ENCODE measurements at regions of chr5 and their contacts with region 1.

Region 1: GRCh38 chr5:35926389-35927051 is 11.9 kb downstream of the CAPSL start:
- H3K4me3 ChIP-seq: no peak overlapping the region
- H3K27ac ChIP-seq: no peak overlapping the region
- H3K4me1 ChIP-seq: peaks cover 4% of the 10 kb centered on the region; the same call in 1 of the 2 replicates
- CTCF ChIP-seq: peak; percentile 78

Region 2: DNA sequence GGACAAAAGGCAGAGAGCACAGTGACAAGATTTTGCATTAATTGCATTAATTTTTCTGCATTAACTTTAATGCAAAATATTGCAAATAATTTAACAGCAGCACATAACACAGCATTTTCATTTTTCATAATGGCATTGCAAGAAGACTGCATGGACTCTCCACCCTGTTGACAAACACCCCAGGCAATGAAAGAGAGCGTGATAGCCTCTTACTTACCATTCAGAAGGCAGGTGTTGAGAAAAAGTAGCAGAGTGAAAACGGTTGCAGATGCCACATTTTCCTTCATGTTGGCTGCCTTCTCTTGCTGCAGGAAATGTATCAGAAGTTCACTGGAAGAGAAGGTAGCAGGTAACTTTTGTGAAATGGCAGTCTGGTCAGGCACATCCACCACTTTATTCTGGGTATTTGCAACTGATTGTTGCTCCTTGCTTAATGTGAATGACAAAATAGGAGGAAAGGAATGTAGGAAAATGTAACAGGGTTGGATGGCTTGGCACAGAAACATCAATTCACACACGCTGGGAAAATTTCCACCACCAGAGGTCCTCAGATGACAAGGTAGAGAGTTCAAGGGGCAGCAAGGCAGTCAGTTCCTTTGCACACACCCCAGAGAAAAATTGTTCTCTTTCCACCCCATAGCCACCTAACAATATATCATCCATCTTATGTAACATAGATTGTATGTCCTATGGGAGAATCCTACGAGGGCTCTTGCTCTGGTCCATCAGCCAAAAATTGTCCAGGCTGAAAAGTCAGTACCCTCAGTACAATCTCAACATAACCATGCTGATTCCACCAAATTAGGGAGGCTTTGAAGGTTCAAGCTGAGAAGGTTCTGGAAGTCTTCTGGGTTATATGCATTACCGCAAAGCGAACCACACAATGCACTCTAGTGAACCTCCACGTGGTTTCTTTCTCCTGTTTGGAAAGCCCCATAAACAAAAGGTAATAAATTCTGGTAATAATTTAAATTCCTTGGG is 836.9 kb before region 1 on chr5:
- CTCF ChIA-PET with region 1: interaction called, 27 read pairs
- POLR2A ChIA-PET with region 1: no interaction called
- H3K4me3 ChIP-seq: no peak overlapping the region
- H3K27ac ChIP-seq: no peak overlapping the region
- H3K4me1 ChIP-seq: no peaks in the 10 kb centered on the region
- CTCF ChIP-seq: no peak; the same call in 1 of the 2 replicates

Region 3: DNA sequence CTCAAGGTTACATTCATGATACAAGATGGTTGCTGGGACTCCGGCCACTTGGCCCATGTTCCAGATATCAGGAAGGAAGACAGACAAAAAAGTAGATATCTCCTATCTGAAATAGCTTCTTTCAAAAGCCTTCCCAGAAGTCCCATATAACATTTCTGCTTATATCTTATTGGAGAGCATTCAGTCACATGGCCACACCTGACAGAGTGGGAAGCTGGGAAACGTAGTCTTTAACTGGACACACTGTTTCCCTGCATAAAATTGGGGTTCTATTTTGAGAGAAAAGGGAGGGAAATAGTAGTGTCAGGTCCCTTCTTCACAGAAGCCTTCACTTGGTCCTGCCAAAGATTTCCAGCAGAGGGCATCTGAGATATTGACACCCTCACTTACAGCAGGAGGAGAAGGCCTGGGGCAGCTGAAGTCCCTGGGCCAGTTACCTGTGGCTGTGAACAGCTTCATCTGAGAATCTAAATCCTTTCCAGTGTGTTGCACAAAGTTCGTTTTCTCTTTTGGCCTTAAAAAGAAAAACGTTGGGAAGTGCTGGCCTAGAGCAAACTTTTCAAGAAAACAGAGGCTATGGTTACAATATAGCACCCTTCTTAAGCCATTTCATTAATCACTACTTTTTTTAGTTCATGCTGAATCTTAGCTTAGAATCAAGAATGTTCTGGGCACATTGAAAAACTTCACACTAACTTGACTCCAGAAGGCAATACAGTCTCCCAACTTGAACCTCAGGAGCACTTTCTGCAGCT is 275.3 kb before region 1 on chr5:
- CTCF ChIA-PET with region 1: interaction called, 63 read pairs
- POLR2A ChIA-PET with region 1: interaction called, 3 read pairs
- H3K4me3 ChIP-seq: no peak overlapping the region
- H3K27ac ChIP-seq: no peak overlapping the region
- H3K4me1 ChIP-seq: no peaks in the 10 kb centered on the region
- CTCF ChIP-seq: 0 out of 2 replicates have a peak, but pooled peaks have one; percentile 18

Region 4: DNA sequence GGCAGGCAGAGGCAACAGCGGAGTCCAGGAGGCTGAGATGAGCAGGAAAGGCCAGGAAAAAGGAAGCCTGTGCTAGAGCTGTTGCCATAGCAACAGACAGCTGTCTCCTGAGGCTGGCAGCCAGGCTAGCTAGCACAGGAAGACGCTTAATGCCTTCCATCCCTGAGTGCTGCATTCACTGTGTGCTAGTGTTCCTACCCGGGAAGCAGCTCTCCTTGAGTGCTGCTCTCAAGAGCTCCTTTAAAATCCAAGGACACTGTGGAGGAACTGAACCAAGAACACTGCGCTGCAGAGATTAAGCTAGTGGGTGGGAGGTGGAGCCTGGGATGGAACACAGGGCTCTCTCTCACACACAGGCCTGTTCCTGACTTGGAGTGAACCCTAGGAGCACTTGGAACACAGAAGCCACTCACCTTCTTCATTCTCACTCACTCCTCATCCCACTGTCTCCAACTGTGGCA is 123.3 kb before region 1 on chr5:
- CTCF ChIA-PET with region 1: interaction called, 10 read pairs
- POLR2A ChIA-PET with region 1: no interaction called
- H3K4me3 ChIP-seq: no peak overlapping the region
- H3K27ac ChIP-seq: no peak overlapping the region
- H3K4me1 ChIP-seq: no peaks in the 10 kb centered on the region
- CTCF ChIP-seq: no peak

Region 5: DNA sequence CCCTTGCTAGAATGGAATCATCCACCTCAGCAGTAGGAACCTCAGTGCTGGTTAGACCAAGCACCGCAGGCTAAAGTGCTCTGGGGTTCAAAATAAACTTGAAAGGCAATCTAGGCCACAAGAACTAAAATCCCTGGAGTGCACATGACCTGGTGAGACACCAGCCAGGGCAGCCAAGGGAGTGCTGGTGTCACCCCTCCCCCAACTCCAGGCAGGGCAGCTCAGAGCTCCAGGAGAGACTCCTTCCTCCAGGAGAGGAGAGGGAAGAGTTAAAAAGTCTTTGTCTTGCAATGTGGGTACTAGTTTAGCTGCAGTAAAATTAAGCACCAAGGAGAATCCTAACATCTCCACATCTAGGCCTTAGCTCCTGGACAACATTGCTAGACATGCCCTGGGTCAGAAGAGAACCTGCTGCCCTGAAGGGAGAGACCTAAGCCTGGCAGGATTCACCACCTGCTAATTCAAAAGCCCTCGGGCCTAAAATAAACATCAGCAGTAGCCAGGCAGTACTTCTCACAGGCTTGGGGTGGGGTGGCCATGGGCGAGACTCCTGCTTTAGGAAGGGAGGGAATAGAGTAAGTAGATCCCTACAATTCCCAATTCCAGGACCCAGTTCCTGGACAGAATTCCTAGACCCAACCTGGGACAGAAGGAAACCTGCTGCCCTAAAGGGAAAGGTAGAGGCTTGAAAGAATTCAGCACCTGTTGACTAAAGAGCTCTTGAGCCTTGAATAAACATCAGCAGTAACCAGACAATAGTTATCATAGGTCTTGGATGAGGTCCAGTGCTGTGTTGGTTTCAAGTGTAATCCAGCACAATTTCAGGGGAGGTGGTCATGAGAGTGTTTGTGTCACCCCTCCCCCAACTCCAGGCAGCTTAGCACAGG is 114.4 kb after region 1 on chr5:
- CTCF ChIA-PET with region 1: interaction called, 20 read pairs
- POLR2A ChIA-PET with region 1: no interaction called
- H3K4me3 ChIP-seq: no peak overlapping the region
- H3K27ac ChIP-seq: no peak overlapping the region; the same call in 1 of the 2 replicates
- H3K4me1 ChIP-seq: peaks cover 10% of the 10 kb centered on the region
- CTCF ChIP-seq: no peak